ENCODE measurements at regions of chr17 and their contacts with region 1.

Region 1: GRCh38 chr17:50783193-50783660 is 15.9 kb upstream of the ANKRD40CL start:
- DNase-seq: peak; percentile 96 to 99
- ATAC-seq: peak; percentile 97 to 99
- H3K4me3 ChIP-seq: no peak overlapping the region
- H3K27ac ChIP-seq: no peak overlapping the region
- H3K4me1 ChIP-seq: 0 out of 3 replicates have a peak, but pooled peaks cover 3% of the 10 kb centered on the region
- CTCF ChIP-seq: peak; percentile 98
- EP300 ChIP-seq: no peak
- POLR2A ChIP-seq: no peak
- RAD21 ChIP-seq: peak; percentile 97 to 98

Region 2: GRCh38 chr17:50423553-50424159 is 359.6 kb before region 1 on chr17:
- CTCF ChIA-PET with region 1: no interaction called
- POLR2A ChIA-PET with region 1: no interaction called
- DNase-seq: peak in 1 of 2 experiments; percentile 50
- ATAC-seq: peak in 1 of 2 experiments; percentile 1; a peak in 1 of 6 replicates
- H3K4me3 ChIP-seq: no peak overlapping the region
- H3K27ac ChIP-seq: no peak overlapping the region
- H3K4me1 ChIP-seq: peaks cover 27% of the 10 kb centered on the region
- CTCF ChIP-seq: no peak
- EP300 ChIP-seq: no peak
- POLR2A ChIP-seq: no peak
- RAD21 ChIP-seq: no peak

Region 3: DNA sequence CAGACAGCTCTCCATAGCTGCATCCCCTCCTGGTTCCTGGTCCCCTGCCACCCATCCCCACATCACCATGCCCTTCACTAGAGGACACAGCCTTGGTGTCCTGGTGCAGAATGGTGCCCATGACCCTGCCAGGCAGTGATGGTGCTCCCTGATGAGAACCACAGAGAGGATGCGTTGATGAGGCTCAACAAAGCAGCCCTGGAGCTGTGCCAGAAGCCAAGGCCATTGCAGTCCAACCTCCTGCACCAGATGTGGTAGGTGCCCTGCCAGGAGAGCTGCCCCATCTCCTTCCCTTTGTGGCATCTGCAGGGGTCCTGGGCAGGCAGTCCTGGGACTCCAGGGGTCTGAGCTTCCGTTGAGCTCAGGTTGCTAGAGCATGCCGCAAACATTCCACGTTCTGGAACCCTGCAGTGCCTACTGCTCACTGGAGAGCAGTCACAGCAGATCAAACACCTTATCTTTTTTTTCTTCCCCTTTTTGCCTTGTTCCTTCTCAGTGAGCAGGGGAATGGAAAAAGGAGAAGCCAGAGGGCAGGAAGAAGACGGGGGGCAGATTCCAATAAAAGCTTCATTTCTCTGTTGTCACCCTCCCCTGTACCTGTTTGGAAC is 256.0 kb before region 1 on chr17:
- CTCF ChIA-PET with region 1: interaction called, 10 read pairs
- POLR2A ChIA-PET with region 1: no interaction called
- DNase-seq: no peak
- ATAC-seq: no peak
- H3K4me3 ChIP-seq: no peak overlapping the region
- H3K27ac ChIP-seq: no peak overlapping the region
- H3K4me1 ChIP-seq: peaks cover 2% of the 10 kb centered on the region; the same call in 2 of the 3 replicates
- CTCF ChIP-seq: no peak
- EP300 ChIP-seq: no peak
- POLR2A ChIP-seq: no peak
- RAD21 ChIP-seq: no peak

Region 4: DNA sequence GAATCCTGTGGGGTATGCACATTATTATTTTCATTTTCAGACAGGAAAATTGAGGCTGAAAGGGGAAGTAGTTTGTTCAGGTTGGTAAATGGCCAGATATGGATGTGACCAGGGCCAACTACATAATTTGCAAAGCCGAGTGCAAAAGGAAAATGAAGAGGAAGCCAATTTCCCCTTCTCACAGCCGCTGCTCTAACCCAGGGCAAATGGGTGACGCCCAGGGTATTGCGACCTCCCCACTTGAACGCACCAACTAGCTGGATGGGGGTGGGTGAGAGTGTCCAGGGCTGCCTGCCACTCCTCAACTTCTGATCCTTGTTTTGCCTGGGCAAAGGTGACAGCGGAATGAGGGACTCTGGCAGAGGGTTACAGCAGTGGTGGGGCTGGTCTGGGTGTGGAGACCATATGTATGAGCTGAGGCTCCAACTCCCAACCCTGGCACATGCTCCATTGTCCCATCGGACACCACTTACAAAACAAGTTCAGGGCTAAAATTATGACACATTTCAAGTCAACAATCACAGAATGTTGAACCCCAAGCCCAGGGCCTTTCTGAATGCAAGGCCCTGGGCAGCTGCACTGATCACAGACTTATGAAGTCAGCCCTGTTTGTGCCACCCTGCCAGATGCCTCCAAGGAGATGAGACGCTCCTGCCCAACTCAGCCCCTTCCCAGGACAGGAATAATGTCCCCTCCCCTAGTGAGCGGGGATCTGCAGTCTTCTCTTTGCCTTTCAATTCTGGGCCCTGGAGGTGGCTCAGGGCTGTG is 17.6 kb before region 1 on chr17:
- CTCF ChIA-PET with region 1: interaction called, 103 read pairs
- POLR2A ChIA-PET with region 1: no interaction called
- DNase-seq: no peak
- ATAC-seq: peak in 1 of 2 experiments; percentile 10; a peak in 1 of 6 replicates
- H3K4me3 ChIP-seq: no peak overlapping the region
- H3K27ac ChIP-seq: peak overlapping the region in 1 of 2 experiments; percentile 21; a peak in 1 of 6 replicates
- H3K4me1 ChIP-seq: peaks cover 36% of the 10 kb centered on the region
- CTCF ChIP-seq: no peak
- EP300 ChIP-seq: no peak
- POLR2A ChIP-seq: no peak
- RAD21 ChIP-seq: no peak

Region 5: GRCh38 chr17:50806141-50806643 is 23.0 kb after region 1 on chr17:
- CTCF ChIA-PET with region 1: interaction called, 114 read pairs
- POLR2A ChIA-PET with region 1: no interaction called
- DNase-seq: peak in 1 of 2 experiments; percentile 32
- ATAC-seq: peak in 1 of 2 experiments; percentile 32; a peak in 3 of 6 replicates
- H3K4me3 ChIP-seq: no peak overlapping the region
- H3K27ac ChIP-seq: peak overlapping the region in 1 of 2 experiments; percentile 11; a peak in 1 of 6 replicates
- H3K4me1 ChIP-seq: no peaks in the 10 kb centered on the region; the same call in 2 of the 3 replicates
- CTCF ChIP-seq: no peak
- EP300 ChIP-seq: no peak
- POLR2A ChIP-seq: no peak
- RAD21 ChIP-seq: no peak

Region 6: GRCh38 chr17:50841949-50842354 is 58.7 kb after region 1 on chr17:
- CTCF ChIA-PET with region 1: interaction called, 324 read pairs
- POLR2A ChIA-PET with region 1: no interaction called
- DNase-seq: peak; percentile 76 to 94
- ATAC-seq: peak; percentile 85 to 94
- H3K4me3 ChIP-seq: no peak overlapping the region
- H3K27ac ChIP-seq: 0 out of 6 replicates have a peak overlapping the region, but pooled peaks of 1 of the 2 experiments have one; percentile 17
- H3K4me1 ChIP-seq: peaks cover 13% of the 10 kb centered on the region
- CTCF ChIP-seq: peak; percentile 93
- EP300 ChIP-seq: no peak
- POLR2A ChIP-seq: no peak
- RAD21 ChIP-seq: peak; percentile 93 to 94

Region 7: DNA sequence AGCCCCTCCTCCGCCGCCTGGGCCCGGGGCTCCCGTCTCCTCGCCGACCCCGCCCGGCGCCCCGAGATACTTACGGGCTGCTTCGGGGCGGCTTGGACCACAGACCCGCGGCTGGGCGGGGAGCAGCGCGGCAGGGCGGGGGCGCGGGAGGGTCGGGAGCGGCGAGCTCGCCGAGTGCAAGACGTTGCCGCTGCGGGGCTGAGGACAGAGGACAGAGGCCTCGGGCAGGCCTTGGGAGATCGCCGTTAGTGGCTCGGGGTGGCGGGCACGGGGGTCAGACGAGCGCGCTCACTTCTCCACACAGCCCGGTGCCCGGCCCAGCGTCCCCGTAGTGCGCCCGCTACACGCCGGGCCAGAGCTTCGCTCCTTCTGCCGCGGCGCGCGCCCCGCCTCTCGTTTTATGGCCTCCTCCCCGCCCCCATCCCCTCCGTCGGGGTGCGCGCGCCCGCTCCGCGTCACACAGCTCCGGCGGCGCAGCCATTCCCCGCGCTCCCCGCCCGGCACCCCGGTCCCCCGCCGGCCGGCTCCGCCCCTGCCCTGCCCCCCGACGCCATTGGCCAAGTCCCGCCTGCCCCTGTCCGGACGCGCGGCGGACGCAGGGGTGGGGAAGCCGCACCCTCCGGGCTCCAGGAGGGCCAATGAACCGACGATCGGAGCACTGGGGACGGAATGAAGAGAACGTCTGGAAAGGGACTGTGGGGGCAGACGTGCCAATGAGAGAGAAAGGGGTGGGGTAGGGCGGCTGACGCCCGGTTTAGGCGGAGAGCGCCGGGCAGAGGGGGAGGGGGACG is 83.0 kb after region 1 on chr17 and contains the start of gene TOB1:
- CTCF ChIA-PET with region 1: interaction called, 16 read pairs
- POLR2A ChIA-PET with region 1: interaction called, 10 read pairs
- DNase-seq: peak; percentile 90 to 98
- ATAC-seq: peak; percentile 72 to 86
- H3K4me3 ChIP-seq: peak within 1 kb of the TSS; percentile 92
- H3K27ac ChIP-seq: peak within 1 kb of the TSS; percentile 97 to 98
- H3K4me1 ChIP-seq: peaks cover 36% of the 10 kb centered on the region
- CTCF ChIP-seq: no peak
- EP300 ChIP-seq: 0 out of 5 replicates have a peak, but pooled peaks of 1 of the 2 experiments have one; percentile 36
- POLR2A ChIP-seq: peak; percentile 100
- RAD21 ChIP-seq: peak; percentile 7 to 8; a peak in 3 of 5 replicates
- polyA plus RNA-seq, gene TOB1: 101 and 133 TPM in 2 replicates

Region 8: DNA sequence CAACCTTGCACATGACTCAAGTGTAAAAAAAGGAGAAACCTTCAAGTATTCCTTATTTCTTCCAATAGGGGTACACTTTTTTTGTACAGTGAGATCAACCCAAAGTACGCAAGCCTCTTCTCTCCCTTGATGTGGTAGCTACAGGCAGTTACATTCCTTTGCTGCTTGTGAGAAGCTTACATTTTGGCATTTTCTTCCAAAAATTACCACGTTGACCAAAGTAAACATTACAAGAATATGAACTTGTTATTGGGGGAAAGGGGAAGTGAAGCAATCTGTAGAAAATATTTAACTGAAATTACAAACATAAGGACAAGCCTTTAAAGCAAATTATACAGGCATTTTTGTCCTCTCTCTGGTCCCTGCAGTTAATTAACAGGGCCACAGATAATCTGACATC is 179.9 kb after region 1 on chr17:
- CTCF ChIA-PET with region 1: interaction called, 155 read pairs
- POLR2A ChIA-PET with region 1: no interaction called
- DNase-seq: no peak
- ATAC-seq: no peak
- H3K4me3 ChIP-seq: no peak overlapping the region
- H3K27ac ChIP-seq: no peak overlapping the region
- H3K4me1 ChIP-seq: 0 out of 3 replicates have a peak, but pooled peaks cover 6% of the 10 kb centered on the region
- CTCF ChIP-seq: no peak
- EP300 ChIP-seq: no peak
- POLR2A ChIP-seq: no peak
- RAD21 ChIP-seq: no peak

Measured in A549 (cell line).